Activated CD4-positive, alpha-beta T cell treated with anti-CD3 and anti-CD28 coated beads for 36 hours (primary cell): ENCODE measurements at regions of chr11 and their contacts with region 1.

Region 1: GRCh38 chr11:124673333-124674167 is at the starts of genes SIAE and SPA17:
- DNase-seq: peak; percentile 94
- ATAC-seq: peak; percentile 90
- H3K4me3 Mint-ChIP-seq: peak within 1 kb of the TSS; percentile 84
- H3K27ac Mint-ChIP-seq: peak within 1 kb of the TSS; percentile 86
- H3K4me1 Mint-ChIP-seq: peaks cover 30% of the 10 kb centered on the region
- H3K27me3 Mint-ChIP-seq: no peaks in the 10 kb centered on the region
- total RNA-seq, gene SIAE: 9.4 to 12.2 TPM
- total RNA-seq, gene SPA17: 3.9 to 4.7 TPM

Region 2: GRCh38 chr11:123330071-123330470 is 1343.5 kb before region 1 on chr11:
- CTCF ChIA-PET with region 1: no interaction called
- POLR2A ChIA-PET with region 1: no interaction called
- intact Hi-C with region 1: no loop called
- DNase-seq: no peak
- ATAC-seq: no peak
- H3K4me3 Mint-ChIP-seq: no peak overlapping the region
- H3K27ac Mint-ChIP-seq: no peak overlapping the region
- H3K4me1 Mint-ChIP-seq: no peaks in the 10 kb centered on the region
- H3K27me3 Mint-ChIP-seq: peaks cover 6% of the 10 kb centered on the region

Region 3: DNA sequence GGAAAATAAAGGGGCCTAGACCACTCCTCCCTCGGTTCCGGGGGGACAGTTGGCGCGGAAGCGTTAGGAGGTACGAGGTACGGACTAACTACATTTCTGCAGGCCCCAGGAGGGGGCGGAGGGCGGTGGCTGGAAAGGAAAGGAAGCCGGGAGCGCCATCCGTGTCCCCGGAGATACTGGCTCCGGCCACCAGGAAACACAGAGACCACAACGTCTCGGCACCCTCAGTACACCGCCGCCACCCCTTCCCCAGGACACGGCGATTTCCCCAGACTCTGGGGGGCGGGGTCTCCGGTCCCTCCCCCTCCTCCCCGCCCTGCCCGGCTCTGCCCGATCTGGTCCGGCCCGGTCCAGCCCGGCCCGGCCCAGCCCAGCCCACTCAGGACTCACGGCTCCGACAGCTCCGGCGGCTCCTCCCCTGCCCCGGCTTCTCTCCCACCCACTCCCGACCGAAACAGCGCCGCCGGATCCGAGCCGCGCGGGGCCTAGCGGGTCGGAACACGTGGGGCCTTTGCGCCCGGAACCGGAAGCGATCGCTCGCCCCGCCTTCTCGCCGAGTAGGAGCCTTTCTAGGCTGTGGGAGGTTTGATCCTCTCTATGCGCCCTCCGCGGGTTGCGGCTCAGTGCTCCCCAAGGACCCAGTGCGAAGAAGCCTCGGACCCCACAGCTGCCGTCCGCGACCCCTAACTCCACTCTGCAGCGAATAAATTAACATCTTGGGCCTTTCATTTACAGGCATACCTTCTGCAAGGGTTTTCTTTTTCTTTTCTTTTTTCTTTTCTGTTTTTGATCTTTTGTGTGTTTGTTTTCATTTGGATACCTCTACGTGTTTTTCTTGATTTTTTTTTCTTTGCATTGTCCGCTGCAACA is 932.2 kb before region 1 on chr11 and contains the start of gene ZNF202:
- CTCF ChIA-PET with region 1: no interaction called
- POLR2A ChIA-PET with region 1: interaction called, 3 read pairs
- intact Hi-C with region 1: loop called in 1 of 2 experiments (anchors 5 kb)
- DNase-seq: peak; percentile 96
- ATAC-seq: peak; percentile 96
- H3K4me3 Mint-ChIP-seq: peak within 1 kb of the TSS; percentile 81
- H3K27ac Mint-ChIP-seq: peak within 1 kb of the TSS; percentile 97
- H3K4me1 Mint-ChIP-seq: peaks cover 31% of the 10 kb centered on the region
- H3K27me3 Mint-ChIP-seq: peaks cover 2% of the 10 kb centered on the region
- total RNA-seq, gene ZNF202: 9.5 to 12.1 TPM

Region 4: DNA sequence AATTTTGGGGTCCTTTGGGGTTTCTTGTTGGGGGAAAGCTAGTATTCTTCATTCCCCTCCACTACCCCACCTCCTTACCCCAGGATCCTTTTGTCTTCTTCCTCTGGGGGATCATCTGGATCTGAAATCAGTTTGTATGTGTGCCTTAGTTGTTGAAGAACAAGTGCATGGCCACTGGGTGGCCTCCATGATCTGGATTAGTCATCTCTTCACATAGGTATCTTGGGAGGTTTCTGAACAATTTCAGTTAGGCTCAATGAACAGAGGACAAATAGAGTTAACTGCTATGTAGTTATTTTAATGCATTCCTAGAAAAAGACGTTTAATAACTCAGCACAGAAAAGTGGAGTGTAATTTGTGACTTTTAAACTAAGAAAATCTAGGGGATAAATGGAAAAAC is 565.4 kb before region 1 on chr11:
- CTCF ChIA-PET with region 1: no interaction called
- POLR2A ChIA-PET with region 1: no interaction called
- intact Hi-C with region 1: no loop called
- DNase-seq: peak; percentile 43
- ATAC-seq: peak; percentile 65
- H3K4me3 Mint-ChIP-seq: no peak overlapping the region
- H3K27ac Mint-ChIP-seq: no peak overlapping the region
- H3K4me1 Mint-ChIP-seq: no peaks in the 10 kb centered on the region
- H3K27me3 Mint-ChIP-seq: peaks cover 20% of the 10 kb centered on the region

Region 5: GRCh38 chr11:124608146-124608545 is 65.4 kb before region 1 on chr11:
- CTCF ChIA-PET with region 1: no interaction called
- POLR2A ChIA-PET with region 1: no interaction called
- intact Hi-C with region 1: no loop called
- DNase-seq: no peak
- ATAC-seq: no peak
- H3K4me3 Mint-ChIP-seq: no peak overlapping the region
- H3K27ac Mint-ChIP-seq: no peak overlapping the region
- H3K4me1 Mint-ChIP-seq: peaks cover 13% of the 10 kb centered on the region
- H3K27me3 Mint-ChIP-seq: no peaks in the 10 kb centered on the region

Region 6: DNA sequence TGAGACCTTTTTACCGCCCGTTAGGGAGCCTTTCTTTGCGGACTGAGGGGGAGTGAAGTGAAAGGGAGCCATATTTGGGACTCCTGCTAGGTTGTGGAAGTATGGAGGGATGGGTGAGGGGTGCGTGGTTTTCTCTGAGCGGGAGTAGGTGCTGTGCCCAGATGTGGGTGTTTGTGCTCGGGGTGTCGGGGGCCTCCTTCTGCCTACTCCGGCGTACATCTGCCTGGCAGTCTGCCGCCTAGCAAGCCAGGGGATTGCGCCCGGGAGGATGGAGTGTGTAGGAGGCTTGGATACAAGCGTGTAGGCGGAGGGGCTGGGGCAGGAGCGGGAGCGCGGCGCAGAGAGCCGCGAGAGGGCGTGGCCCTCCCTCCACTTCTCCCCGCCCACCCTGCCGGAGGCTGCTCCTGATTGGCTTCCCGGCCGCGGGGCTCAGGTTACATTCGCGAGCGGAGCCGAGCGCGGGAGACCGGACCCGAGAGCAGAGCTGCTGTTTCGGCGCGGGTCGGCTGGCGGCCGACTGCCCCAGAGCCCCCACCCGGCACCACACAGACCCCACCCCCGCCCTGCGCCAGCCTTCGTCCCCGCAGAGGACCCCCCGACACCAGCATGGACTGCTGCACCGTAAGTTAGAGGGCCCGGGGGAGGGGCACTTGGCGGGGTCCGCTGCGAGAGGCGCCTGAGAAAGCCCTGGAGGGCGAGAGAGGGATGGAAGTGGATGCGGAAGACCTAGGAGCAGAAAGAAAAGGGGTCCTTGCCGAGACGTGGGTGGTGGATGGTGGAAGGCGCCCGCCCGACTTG is 66.1 kb after region 1 on chr11 and contains the start of gene NRGN:
- CTCF ChIA-PET with region 1: interaction called, 20 read pairs
- POLR2A ChIA-PET with region 1: no interaction called
- intact Hi-C with region 1: loop called in 1 of 2 experiments (anchors 1 kb)
- DNase-seq: peak; percentile 93
- ATAC-seq: peak; percentile 95
- H3K4me3 Mint-ChIP-seq: peak within 1 kb of the TSS; percentile 76
- H3K27ac Mint-ChIP-seq: peak within 1 kb of the TSS; percentile 17
- H3K4me1 Mint-ChIP-seq: peaks cover 9% of the 10 kb centered on the region
- H3K27me3 Mint-ChIP-seq: peaks cover 2% of the 10 kb centered on the region
- total RNA-seq, gene NRGN: 13.5 to 18.1 TPM

Region 7: GRCh38 chr11:124793466-124794278 is 120.1 kb after region 1 on chr11:
- CTCF ChIA-PET with region 1: interaction called, 29 read pairs
- POLR2A ChIA-PET with region 1: no interaction called
- intact Hi-C with region 1: loop called (anchors 1 kb)
- DNase-seq: peak; percentile 38
- ATAC-seq: peak; percentile 72
- H3K4me3 Mint-ChIP-seq: no peak overlapping the region
- H3K27ac Mint-ChIP-seq: no peak overlapping the region
- H3K4me1 Mint-ChIP-seq: peaks cover 47% of the 10 kb centered on the region
- H3K27me3 Mint-ChIP-seq: no peaks in the 10 kb centered on the region

Region 8: GRCh38 chr11:124865921-124866583 is 192.5 kb after region 1 on chr11:
- CTCF ChIA-PET with region 1: interaction called, 20 read pairs
- POLR2A ChIA-PET with region 1: no interaction called
- intact Hi-C with region 1: loop called in 1 of 2 experiments (anchors 1 kb)
- DNase-seq: peak; percentile 77
- ATAC-seq: peak; percentile 60
- H3K4me3 Mint-ChIP-seq: no peak overlapping the region
- H3K27ac Mint-ChIP-seq: no peak overlapping the region
- H3K4me1 Mint-ChIP-seq: peaks cover 31% of the 10 kb centered on the region
- H3K27me3 Mint-ChIP-seq: peaks cover 81% of the 10 kb centered on the region

Region 9: DNA sequence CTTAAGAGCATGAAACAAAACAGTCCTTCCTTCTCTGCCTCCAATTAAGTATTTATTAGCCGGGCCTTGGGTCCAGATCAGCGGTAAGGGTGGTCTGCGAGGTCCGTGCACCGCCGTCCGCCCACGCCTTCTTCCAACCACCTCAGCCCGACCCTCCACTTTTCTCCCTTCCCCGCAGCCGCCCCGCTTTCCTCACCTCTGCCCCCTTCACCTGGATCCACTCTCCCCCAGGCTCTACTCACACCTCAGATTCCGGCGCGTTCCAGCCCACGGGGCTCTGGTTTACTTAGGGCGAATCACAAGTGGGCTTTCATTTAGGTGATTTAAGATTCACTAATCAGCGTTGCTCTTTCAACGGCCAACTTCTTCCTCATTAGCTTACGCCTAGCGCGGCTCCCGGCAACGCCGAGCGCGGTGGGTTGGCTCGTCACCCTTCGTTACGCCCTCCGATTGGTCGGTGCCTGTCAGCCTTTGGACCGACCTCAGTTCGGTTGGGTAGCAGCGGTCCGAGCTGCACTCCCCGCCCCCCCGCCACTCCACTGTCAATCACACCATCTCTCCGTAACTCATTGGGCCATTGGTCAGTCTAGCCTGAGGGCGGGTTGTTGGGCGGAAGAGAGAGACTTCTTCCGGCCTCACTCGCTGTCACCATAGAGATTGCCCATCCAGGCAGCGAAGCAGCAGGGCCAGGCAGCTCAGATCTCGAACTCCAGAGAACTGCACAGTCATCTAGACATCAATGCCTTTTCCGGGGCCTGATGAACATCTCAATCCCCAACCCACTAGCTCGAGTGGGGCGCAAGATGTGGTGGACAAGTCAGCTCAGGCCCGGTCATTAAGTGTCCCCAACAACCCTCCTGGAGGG is 438.0 kb after region 1 on chr11 and contains the start of gene TMEM218:
- CTCF ChIA-PET with region 1: no interaction called
- POLR2A ChIA-PET with region 1: no interaction called
- intact Hi-C with region 1: loop called (anchors 2 to 5 kb)
- DNase-seq: peak; percentile 98
- ATAC-seq: peak; percentile 99
- H3K4me3 Mint-ChIP-seq: peak within 1 kb of the TSS; percentile 93
- H3K27ac Mint-ChIP-seq: peak within 1 kb of the TSS; percentile 95
- H3K4me1 Mint-ChIP-seq: peaks cover 18% of the 10 kb centered on the region
- H3K27me3 Mint-ChIP-seq: no peaks in the 10 kb centered on the region
- total RNA-seq, gene TMEM218: 11.3 TPM